Activated B cell treated with CpG ODN at 0.5 μM for 24 hours (primary cell): ENCODE measurements at regions of chr7 and their contacts with region 1.

Region 1: GRCh38 chr7:101983147-101983811 is 165.9 kb downstream of the CUX1 start:
- DNase-seq: no peak
- ATAC-seq: no peak
- H3K4me3 Mint-ChIP-seq: no peak overlapping the region
- H3K27ac Mint-ChIP-seq: peak overlapping the region; percentile 30
- H3K4me1 Mint-ChIP-seq: peaks cover 50% of the 10 kb centered on the region
- H3K27me3 Mint-ChIP-seq: no peaks in the 10 kb centered on the region
- CTCF ChIP-seq: no peak

Region 2: GRCh38 chr7:101957744-101958525 is 25.3 kb before region 1 on chr7:
- CTCF ChIA-PET with region 1: no interaction called
- POLR2A ChIA-PET with region 1: interaction called, 11 read pairs
- intact Hi-C with region 1: loop called (anchors 2 kb)
- DNase-seq: no peak
- ATAC-seq: peak; percentile 43
- H3K4me3 Mint-ChIP-seq: no peak overlapping the region
- H3K27ac Mint-ChIP-seq: no peak overlapping the region
- H3K4me1 Mint-ChIP-seq: peaks cover 48% of the 10 kb centered on the region
- H3K27me3 Mint-ChIP-seq: no peaks in the 10 kb centered on the region
- CTCF ChIP-seq: no peak